GM10248 (cell line): ENCODE measurements at regions of chr12 and their contacts with region 1.

Region 1: GRCh38 chr12:65602610-65603295 is 221.5 kb upstream of the HMGA2 start:
- DNase-seq: peak; percentile 44
- CTCF ChIP-seq: peak; percentile 74

Region 2: GRCh38 chr12:66087365-66087943 is 484.7 kb after region 1 on chr12:
- CTCF ChIA-PET with region 1: interaction called, 15 read pairs
- POLR2A ChIA-PET with region 1: no interaction called
- DNase-seq: peak; percentile 52
- CTCF ChIP-seq: peak; percentile 67

Region 3: GRCh38 chr12:66107451-66107915 is 504.7 kb after region 1 on chr12:
- CTCF ChIA-PET with region 1: interaction called, 15 read pairs
- POLR2A ChIA-PET with region 1: no interaction called
- DNase-seq: peak; percentile 71
- CTCF ChIP-seq: peak; percentile 59